ENCODE measurements at regions of chr6 and their contacts with region 1.

Region 1: DNA sequence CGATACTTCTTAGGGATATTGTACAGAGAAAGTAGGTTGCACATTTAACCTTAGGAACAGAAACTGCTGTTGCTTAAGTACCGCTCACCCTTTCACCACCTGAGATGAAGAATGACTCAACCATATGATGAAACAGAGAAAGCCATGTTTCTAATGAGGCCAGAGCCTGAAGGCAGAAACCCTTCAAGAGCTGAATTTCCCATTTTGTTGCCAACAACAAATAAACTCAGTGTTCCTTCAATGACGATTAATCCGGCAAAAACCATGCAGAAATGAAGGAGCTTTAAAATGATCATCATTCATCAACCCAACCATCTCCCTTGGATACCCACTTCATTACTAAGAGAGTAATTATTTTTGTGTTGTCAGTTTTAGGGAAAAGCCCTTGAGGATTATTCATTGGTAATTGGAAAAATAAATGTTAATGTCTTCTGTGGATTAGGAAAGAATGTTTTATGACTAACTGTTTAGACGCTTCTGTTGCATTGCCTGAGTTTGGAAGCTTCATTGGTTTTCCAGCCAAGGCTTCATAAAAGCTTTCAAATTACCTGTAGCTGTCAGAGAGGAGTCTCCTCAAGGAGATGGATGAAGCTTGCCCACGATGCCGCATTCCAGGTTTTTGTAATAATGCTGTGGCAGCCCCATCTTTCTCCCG is 112.1 kb upstream of the IYD start:
- DNase-seq: peak; percentile 97
- H3K4me3 Mint-ChIP-seq: peak overlapping the region; percentile 44
- H3K27ac Mint-ChIP-seq: peak overlapping the region; percentile 93
- H3K4me1 Mint-ChIP-seq: peaks cover 48% of the 10 kb centered on the region
- H3K27me3 Mint-ChIP-seq: no peaks in the 10 kb centered on the region
- CTCF ChIP-seq: no peak

Region 2: GRCh38 chr6:150079604-150080003 is 177.1 kb before region 1 on chr6:
- CTCF ChIA-PET with region 1: interaction called, 20 read pairs
- POLR2A ChIA-PET with region 1: interaction called, 6 read pairs
- intact Hi-C with region 1: loop called (anchors 5 kb)
- DNase-seq: no peak
- H3K4me3 Mint-ChIP-seq: no peak overlapping the region
- H3K27ac Mint-ChIP-seq: no peak overlapping the region
- H3K4me1 Mint-ChIP-seq: peaks cover 6% of the 10 kb centered on the region
- H3K27me3 Mint-ChIP-seq: peaks cover 10% of the 10 kb centered on the region
- CTCF ChIP-seq: no peak

Region 3: DNA sequence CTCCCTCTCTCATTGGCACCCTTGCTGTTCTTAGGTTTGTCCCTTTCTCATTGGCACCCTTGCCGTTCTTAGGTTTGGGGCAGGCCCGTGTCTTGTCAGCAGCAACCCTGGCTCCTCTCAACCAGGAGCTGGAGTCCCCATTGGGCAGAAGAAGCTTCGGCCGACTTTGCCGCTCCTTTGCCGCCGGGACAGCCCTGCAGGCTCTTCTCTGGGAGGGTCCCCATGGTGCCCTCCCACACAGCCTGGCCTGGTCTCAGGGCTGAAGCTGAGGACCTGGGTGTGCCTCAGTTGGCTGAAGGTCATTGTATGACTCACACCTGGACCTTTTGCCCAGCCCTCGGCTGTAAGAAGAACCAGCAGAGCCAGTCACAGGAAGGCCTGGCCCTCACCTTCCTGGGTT is 54.3 kb before region 1 on chr6:
- CTCF ChIA-PET with region 1: no interaction called
- POLR2A ChIA-PET with region 1: interaction called, 16 read pairs
- intact Hi-C with region 1: no loop called
- DNase-seq: peak; percentile 57
- H3K4me3 Mint-ChIP-seq: peak overlapping the region; percentile 42
- H3K27ac Mint-ChIP-seq: peak overlapping the region; percentile 95
- H3K4me1 Mint-ChIP-seq: peaks cover 54% of the 10 kb centered on the region
- H3K27me3 Mint-ChIP-seq: no peaks in the 10 kb centered on the region
- CTCF ChIP-seq: no peak

Region 4: GRCh38 chr6:150229775-150230561 is 26.8 kb before region 1 on chr6:
- CTCF ChIA-PET with region 1: no interaction called
- POLR2A ChIA-PET with region 1: interaction called, 15 read pairs
- intact Hi-C with region 1: no loop called
- DNase-seq: no peak
- H3K4me3 Mint-ChIP-seq: no peak overlapping the region
- H3K27ac Mint-ChIP-seq: peak overlapping the region; percentile 86
- H3K4me1 Mint-ChIP-seq: peaks cover 16% of the 10 kb centered on the region
- H3K27me3 Mint-ChIP-seq: no peaks in the 10 kb centered on the region
- CTCF ChIP-seq: no peak

Region 5: GRCh38 chr6:150293423-150294173 is 36.9 kb after region 1 on chr6:
- CTCF ChIA-PET with region 1: interaction called, 4 read pairs
- POLR2A ChIA-PET with region 1: interaction called, 68 read pairs
- intact Hi-C with region 1: loop called (anchors 1 kb)
- DNase-seq: peak; percentile 69
- H3K4me3 Mint-ChIP-seq: no peak overlapping the region
- H3K27ac Mint-ChIP-seq: peak overlapping the region; percentile 98
- H3K4me1 Mint-ChIP-seq: peaks cover 46% of the 10 kb centered on the region
- H3K27me3 Mint-ChIP-seq: no peaks in the 10 kb centered on the region
- CTCF ChIP-seq: no peak

Region 6: DNA sequence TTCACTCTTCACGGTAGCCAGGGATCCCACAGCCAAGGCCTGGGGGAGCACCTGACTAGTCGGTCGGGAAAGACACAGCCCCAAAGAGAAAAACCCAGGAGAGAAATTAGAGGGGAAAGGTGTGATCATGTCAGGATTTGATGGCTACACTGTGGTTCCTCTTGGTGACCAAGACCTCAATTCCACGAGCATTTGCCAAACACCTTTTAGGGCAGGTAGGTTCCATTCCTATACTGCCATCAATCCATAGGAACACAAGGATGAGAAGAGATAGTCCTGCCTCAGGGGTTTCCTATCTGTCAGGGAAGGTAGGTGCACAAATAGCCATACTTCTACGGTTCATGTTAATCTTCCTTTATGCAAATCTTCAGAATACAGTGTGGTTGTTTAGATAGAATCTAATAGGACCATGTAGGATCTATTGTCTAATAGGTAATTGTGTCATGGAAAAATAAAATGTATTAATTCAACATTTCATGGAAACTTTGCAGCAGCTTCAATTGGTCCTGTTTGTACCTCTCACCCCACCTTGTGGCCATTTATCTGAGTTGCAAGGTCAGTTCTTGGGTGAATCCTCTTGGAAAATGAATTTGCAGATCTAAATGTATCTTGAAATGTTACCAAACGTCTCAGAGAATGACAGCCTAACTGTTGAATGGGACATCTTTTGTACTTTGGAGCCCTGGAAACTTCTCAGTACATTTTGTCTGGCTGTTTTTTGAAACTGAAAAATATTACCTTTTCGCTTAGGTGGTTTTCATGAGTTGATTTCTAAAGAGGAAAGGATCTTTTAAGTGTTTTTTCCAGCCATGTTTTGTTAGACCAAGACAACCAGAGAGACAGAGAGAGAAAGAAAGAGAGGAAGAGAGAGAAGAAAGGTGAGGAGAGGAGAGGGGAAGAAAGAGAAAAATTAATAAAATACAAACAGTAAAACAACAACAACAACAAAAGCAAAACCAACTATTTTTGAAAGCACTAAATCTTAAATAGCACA is 78.3 kb after region 1 on chr6:
- CTCF ChIA-PET with region 1: interaction called, 5 read pairs
- POLR2A ChIA-PET with region 1: interaction called, 9 read pairs
- intact Hi-C with region 1: loop called (anchors 1 kb)
- DNase-seq: peak; percentile 76
- H3K4me3 Mint-ChIP-seq: no peak overlapping the region
- H3K27ac Mint-ChIP-seq: peak overlapping the region; percentile 4
- H3K4me1 Mint-ChIP-seq: peaks cover 18% of the 10 kb centered on the region
- H3K27me3 Mint-ChIP-seq: no peaks in the 10 kb centered on the region
- CTCF ChIP-seq: peak; percentile 82

Region 7: DNA sequence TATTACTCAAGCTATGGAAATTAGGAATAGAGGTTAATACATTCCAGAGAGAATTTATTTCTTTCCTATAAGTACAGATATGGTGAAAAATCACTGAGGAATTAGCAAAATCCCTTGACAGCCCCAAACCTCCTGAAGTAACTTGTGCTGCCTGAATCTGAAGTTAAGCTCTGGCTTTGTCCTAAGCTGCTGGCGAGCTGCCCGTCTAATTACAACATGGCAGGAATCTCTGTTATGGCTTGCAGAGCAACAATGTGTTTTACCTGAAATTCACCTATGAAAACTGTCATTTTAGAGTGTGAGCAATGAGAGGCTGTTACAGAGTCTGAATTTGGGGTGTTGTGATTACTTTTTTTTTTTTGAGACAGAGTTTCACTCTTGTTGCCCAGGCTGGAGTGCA is 89.6 kb after region 1 on chr6:
- CTCF ChIA-PET with region 1: no interaction called
- POLR2A ChIA-PET with region 1: no interaction called
- intact Hi-C with region 1: no loop called
- DNase-seq: peak; percentile 50
- H3K4me3 Mint-ChIP-seq: no peak overlapping the region
- H3K27ac Mint-ChIP-seq: no peak overlapping the region
- H3K4me1 Mint-ChIP-seq: peaks cover 9% of the 10 kb centered on the region
- H3K27me3 Mint-ChIP-seq: no peaks in the 10 kb centered on the region
- CTCF ChIP-seq: no peak

Measured in MCF 10A (cell line).